ENCODE measurements at regions of chr11 and their contacts with region 1.

Region 1: GRCh38 chr11:2420502-2421225 is 20.1 kb downstream of the TSSC4 start:
- DNase-seq: peak; percentile 27
- H3K4me3 ChIP-seq: no peak overlapping the region
- H3K27ac ChIP-seq: no peak overlapping the region
- H3K27me3 ChIP-seq: peaks cover 8% of the 10 kb centered on the region
- CTCF ChIP-seq: peak; percentile 92

Region 2: DNA sequence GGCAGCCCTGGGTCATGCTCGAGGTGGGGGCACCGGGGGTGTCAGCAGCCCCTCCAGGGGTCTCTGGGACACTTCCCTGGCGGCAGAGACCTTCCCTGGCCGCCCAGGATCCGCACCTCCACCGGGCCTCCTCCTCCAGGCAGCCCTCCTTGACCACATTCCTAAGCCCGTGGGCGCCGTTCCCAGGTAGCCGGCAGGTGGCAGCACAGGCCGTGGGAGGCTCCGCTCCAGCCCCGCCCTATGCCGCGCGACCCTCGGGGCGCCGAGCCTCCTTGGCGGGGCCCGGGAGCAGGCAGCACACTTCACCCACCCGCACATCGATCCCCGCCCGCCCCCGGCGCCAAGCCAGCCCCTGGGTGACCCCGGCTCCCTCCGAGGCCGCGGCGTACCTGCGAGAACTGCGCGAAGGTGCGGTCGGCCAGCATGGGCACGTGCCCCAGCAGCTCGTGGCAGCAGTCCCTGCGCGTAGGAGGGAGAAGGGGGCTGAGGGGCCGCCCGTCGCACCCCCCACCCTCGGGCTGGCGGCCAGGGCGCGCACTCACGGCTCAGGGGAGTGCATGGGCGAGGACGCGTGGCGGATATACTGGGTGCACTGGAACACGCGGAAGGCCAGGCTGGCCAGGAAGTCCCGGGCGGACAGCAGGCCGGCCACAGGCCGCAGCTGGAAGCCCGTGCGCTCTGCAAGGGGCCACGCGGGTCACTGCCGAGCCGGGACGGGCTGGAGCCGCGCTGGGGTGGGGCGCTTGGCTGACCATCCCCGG is 254.4 kb before region 1 on chr11:
- CTCF ChIA-PET with region 1: interaction called, 13 read pairs
- POLR2A ChIA-PET with region 1: no interaction called
- DNase-seq: no peak
- H3K4me3 ChIP-seq: no peak overlapping the region
- H3K27ac ChIP-seq: no peak overlapping the region
- H3K27me3 ChIP-seq: peaks cover 17% of the 10 kb centered on the region
- CTCF ChIP-seq: peak; percentile 46

Region 3: DNA sequence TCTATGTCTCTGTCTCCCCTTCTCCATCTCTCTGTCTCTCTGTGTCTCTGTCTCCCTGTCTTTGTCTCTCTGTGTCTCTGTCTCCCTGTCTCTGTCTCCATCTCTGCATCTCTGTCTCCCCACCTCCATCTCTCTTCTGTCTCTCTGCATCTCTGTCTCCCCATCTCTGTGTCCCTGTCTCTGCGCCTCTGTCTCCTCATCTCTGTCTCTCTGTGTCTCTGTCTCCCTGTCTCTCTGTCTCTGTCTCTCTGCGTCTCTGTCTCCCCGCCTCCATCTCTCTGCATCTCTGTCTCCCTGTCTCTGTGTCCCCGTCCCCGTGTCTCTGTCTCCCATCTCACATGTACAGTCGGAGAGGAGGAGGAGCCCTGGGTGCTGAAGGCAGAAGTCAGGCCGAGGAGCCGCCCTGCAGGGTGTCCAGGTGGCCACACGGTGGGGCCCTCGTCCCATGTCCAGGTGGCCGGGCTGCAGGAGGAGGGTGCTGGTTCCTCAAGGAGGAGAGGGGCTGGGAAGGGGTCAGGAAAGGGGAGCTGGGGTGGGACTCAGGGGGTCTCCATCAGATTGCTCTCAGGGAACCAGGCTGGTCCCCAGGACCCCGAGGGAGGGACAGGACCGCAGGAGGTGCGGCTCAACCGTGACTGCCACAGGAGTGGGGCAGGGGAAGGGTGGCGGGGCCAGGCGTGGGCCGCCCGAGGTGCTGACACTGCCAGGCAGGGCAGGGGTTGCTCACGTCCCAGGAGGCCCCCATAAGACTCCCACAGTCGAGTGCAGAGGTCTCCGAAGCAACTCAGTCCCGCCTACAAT is 223.5 kb before region 1 on chr11:
- CTCF ChIA-PET with region 1: interaction called, 51 read pairs
- POLR2A ChIA-PET with region 1: no interaction called
- DNase-seq: peak; percentile 20
- H3K4me3 ChIP-seq: no peak overlapping the region
- H3K27ac ChIP-seq: no peak overlapping the region
- H3K27me3 ChIP-seq: peaks cover 11% of the 10 kb centered on the region
- CTCF ChIP-seq: peak; percentile 86

Region 4: GRCh38 chr11:2311353-2312133 is 109.1 kb before region 1 on chr11:
- CTCF ChIA-PET with region 1: interaction called, 116 read pairs
- POLR2A ChIA-PET with region 1: no interaction called
- DNase-seq: no peak
- H3K4me3 ChIP-seq: no peak overlapping the region
- H3K27ac ChIP-seq: no peak overlapping the region
- H3K27me3 ChIP-seq: no peaks in the 10 kb centered on the region
- CTCF ChIP-seq: no peak

Region 5: DNA sequence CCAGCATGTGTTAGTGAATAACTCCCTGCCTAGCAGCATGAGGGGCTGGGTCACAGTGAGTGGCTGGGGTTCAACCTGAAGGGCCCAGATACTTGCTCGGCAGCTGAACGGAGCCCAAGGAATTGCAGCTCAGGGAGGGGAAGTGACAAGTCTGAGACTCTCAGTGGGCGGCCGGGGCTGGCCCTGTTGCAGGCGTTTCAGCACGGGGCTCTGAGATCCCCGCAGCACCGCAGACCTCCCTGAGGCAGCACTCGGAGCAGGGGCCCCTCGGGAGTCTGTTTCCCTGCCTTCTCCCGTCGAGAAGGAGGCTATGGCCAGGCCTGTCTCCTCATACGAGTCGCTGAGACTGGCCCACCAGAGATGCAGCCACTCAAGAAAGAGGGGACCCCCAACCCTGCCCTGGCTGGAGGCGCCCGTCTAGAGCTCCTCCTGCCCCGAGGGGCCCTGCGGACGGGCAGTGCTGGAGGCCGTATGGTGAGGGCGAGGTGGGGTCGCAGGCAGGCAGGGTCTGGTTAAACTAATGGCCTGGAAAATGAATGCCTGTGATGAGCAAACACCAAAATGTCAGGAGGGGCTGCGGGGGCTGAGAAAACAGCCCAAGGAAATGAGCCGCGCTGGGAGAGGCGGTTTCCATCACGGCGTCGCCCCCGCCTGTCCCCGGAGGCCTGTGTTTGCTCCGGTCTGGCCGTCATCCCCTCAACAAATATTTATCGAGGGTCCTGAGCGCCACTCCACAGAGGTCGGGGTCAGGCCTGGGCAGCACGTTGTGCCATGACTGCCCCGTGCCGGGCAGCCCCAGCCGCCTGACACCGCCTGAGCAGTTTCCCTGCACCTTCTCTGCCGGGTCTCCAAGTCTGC is 10.8 kb before region 1 on chr11:
- CTCF ChIA-PET with region 1: interaction called, 20 read pairs
- POLR2A ChIA-PET with region 1: no interaction called
- DNase-seq: no peak
- H3K4me3 ChIP-seq: no peak overlapping the region
- H3K27ac ChIP-seq: no peak overlapping the region
- H3K27me3 ChIP-seq: peaks cover 13% of the 10 kb centered on the region
- CTCF ChIP-seq: no peak

Region 6: GRCh38 chr11:2433106-2433925 is 12.7 kb after region 1 on chr11:
- CTCF ChIA-PET with region 1: no interaction called
- POLR2A ChIA-PET with region 1: no interaction called
- DNase-seq: no peak
- H3K4me3 ChIP-seq: no peak overlapping the region
- H3K27ac ChIP-seq: no peak overlapping the region
- H3K27me3 ChIP-seq: peaks cover 6% of the 10 kb centered on the region
- CTCF ChIP-seq: no peak

Region 7: GRCh38 chr11:2443406-2443805 is 22.7 kb after region 1 on chr11:
- CTCF ChIA-PET with region 1: no interaction called
- POLR2A ChIA-PET with region 1: no interaction called
- DNase-seq: no peak
- H3K4me3 ChIP-seq: no peak overlapping the region
- H3K27ac ChIP-seq: no peak overlapping the region
- H3K27me3 ChIP-seq: peaks cover 32% of the 10 kb centered on the region
- CTCF ChIP-seq: no peak

Region 8: GRCh38 chr11:2489083-2489482 is 68.4 kb after region 1 on chr11:
- CTCF ChIA-PET with region 1: no interaction called
- POLR2A ChIA-PET with region 1: no interaction called
- DNase-seq: no peak
- H3K4me3 ChIP-seq: no peak overlapping the region
- H3K27ac ChIP-seq: no peak overlapping the region
- H3K27me3 ChIP-seq: peaks cover 9% of the 10 kb centered on the region
- CTCF ChIP-seq: no peak

Region 9: GRCh38 chr11:2630679-2631078 is 210.0 kb after region 1 on chr11:
- CTCF ChIA-PET with region 1: no interaction called
- POLR2A ChIA-PET with region 1: no interaction called
- DNase-seq: no peak
- H3K4me3 ChIP-seq: no peak overlapping the region
- H3K27ac ChIP-seq: no peak overlapping the region
- H3K27me3 ChIP-seq: no peaks in the 10 kb centered on the region
- CTCF ChIP-seq: no peak

Measured in AG04450 (cell line).